Caco-2 (cell line): ENCODE measurements at regions of chr6 and their contacts with region 1.

Region 1: GRCh38 chr6:37018198-37019064 is 13.0 kb downstream of the FGD2 start:
- DNase-seq: peak; percentile 87 to 90
- H3K4me3 ChIP-seq: no peak overlapping the region
- H3K4me3 Mint-ChIP-seq: no peak overlapping the region
- H3K27ac Mint-ChIP-seq: no peak overlapping the region
- H3K4me1 ChIP-seq: peaks cover 15% of the 10 kb centered on the region
- H3K4me1 Mint-ChIP-seq: peaks cover 24% of the 10 kb centered on the region
- H3K27me3 ChIP-seq: no peaks in the 10 kb centered on the region
- H3K27me3 Mint-ChIP-seq: no peaks in the 10 kb centered on the region
- CTCF ChIP-seq: peak; percentile 85 to 96

Region 2: GRCh38 chr6:36765594-36766398 is 252.6 kb before region 1 on chr6:
- CTCF ChIA-PET with region 1: interaction called, 8 read pairs
- POLR2A ChIA-PET with region 1: no interaction called
- intact Hi-C with region 1: loop called (anchors 1 kb)
- DNase-seq: peak; percentile 77 to 85
- H3K4me3 ChIP-seq: no peak overlapping the region
- H3K4me3 Mint-ChIP-seq: no peak overlapping the region
- H3K27ac Mint-ChIP-seq: no peak overlapping the region
- H3K4me1 ChIP-seq: no peaks in the 10 kb centered on the region
- H3K4me1 Mint-ChIP-seq: no peaks in the 10 kb centered on the region
- H3K27me3 ChIP-seq: no peaks in the 10 kb centered on the region
- H3K27me3 Mint-ChIP-seq: no peaks in the 10 kb centered on the region
- CTCF ChIP-seq: peak; percentile 86 to 93

Region 3: DNA sequence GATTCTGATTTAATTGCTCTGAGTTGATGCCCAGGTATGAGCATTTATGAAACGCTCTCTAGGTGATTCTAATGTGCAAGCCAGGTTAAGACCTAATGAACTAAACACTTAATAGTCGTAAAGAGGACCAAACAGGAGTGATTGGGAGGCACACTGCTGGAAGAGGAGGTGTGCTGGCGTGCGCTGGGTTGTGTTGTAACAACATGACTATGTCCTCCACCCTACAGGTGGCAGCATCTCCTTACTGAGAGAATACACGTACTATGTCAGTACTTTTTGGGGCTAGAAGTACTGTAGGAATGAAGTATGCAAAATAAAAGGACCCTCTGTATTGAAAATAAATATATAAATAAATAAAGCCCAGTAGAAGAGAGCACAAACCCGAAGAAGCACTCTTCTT is 120.8 kb before region 1 on chr6:
- CTCF ChIA-PET with region 1: interaction called, 12 read pairs
- POLR2A ChIA-PET with region 1: no interaction called
- intact Hi-C with region 1: loop called (anchors 1 kb)
- DNase-seq: peak in 1 of 2 experiments; percentile 50
- H3K4me3 ChIP-seq: no peak overlapping the region
- H3K4me3 Mint-ChIP-seq: no peak overlapping the region
- H3K27ac Mint-ChIP-seq: no peak overlapping the region
- H3K4me1 ChIP-seq: no peaks in the 10 kb centered on the region
- H3K4me1 Mint-ChIP-seq: no peaks in the 10 kb centered on the region
- H3K27me3 ChIP-seq: no peaks in the 10 kb centered on the region
- H3K27me3 Mint-ChIP-seq: no peaks in the 10 kb centered on the region
- CTCF ChIP-seq: peak in 1 of 2 experiments; percentile 40

Region 4: DNA sequence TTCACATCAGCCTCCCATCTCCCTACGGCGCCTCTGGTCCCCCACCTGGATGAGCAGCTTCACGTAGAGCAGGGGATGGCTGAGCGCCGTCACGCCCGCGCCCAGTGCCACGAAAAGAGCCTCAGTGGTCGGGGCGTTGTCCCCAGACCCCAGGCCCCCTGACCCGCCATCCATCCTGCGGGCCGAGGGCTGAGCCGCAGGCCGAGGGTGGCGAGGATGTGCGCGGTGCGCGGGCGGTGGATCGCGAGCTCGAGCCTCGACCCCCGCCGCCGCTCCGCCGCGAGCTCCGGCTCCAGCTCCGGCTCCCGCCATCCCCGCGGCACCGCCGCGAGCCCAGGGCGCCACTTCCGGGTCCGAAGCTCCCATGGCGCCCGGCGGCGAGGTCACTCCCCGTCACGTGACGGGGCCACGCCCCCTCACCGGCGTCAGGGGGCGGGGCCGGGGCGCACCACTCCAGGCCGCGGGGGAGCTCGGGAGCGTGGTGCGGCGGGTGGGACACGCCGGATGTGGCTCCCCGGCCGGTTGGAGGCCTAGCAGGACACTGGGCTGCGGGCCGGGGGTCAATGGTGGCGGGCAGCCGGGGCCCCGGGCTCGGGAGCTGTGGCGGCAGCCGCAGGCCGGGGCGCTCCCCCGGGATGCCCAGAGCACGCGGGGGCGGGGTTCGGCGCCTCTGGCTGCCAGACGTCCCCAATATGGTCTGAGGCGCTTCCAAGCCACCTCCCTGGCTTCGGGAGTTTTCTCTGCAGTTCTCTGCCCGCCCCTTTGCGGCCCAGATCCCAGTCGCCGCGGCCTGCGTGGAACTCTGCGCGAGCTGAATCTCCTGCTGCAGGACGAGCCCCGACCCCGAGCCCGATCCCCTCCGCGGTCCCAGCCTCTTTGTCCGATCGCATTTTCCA is 32.4 kb before region 1 on chr6 and contains the start of gene MTCH1:
- CTCF ChIA-PET with region 1: interaction called, 28 read pairs
- POLR2A ChIA-PET with region 1: interaction called, 11 read pairs
- intact Hi-C with region 1: loop called (anchors 2 kb)
- DNase-seq: peak; percentile 84 to 93
- H3K4me3 ChIP-seq: peak within 1 kb of the TSS; percentile 98
- H3K4me3 Mint-ChIP-seq: no peak within 1 kb of the TSS
- H3K27ac Mint-ChIP-seq: peak within 1 kb of the TSS; percentile 94
- H3K4me1 ChIP-seq: peaks cover 6% of the 10 kb centered on the region; the same call in 1 of the 2 replicates
- H3K4me1 Mint-ChIP-seq: peaks cover 12% of the 10 kb centered on the region
- H3K27me3 ChIP-seq: no peaks in the 10 kb centered on the region
- H3K27me3 Mint-ChIP-seq: no peaks in the 10 kb centered on the region
- CTCF ChIP-seq: no peak
- total RNA-seq, gene MTCH1: 170 and 178 TPM in 2 replicates

Region 5: GRCh38 chr6:37059344-37060206 is 41.1 kb after region 1 on chr6:
- CTCF ChIA-PET with region 1: no interaction called
- POLR2A ChIA-PET with region 1: no interaction called
- intact Hi-C with region 1: loop called (anchors 1 kb)
- DNase-seq: peak; percentile 87 to 89
- H3K4me3 ChIP-seq: no peak overlapping the region
- H3K4me3 Mint-ChIP-seq: peak overlapping the region; percentile 34
- H3K27ac Mint-ChIP-seq: peak overlapping the region; percentile 95
- H3K4me1 ChIP-seq: peaks cover 22% of the 10 kb centered on the region
- H3K4me1 Mint-ChIP-seq: peaks cover 18% of the 10 kb centered on the region
- H3K27me3 ChIP-seq: no peaks in the 10 kb centered on the region
- H3K27me3 Mint-ChIP-seq: no peaks in the 10 kb centered on the region
- CTCF ChIP-seq: peak; percentile 57 to 88

Region 6: DNA sequence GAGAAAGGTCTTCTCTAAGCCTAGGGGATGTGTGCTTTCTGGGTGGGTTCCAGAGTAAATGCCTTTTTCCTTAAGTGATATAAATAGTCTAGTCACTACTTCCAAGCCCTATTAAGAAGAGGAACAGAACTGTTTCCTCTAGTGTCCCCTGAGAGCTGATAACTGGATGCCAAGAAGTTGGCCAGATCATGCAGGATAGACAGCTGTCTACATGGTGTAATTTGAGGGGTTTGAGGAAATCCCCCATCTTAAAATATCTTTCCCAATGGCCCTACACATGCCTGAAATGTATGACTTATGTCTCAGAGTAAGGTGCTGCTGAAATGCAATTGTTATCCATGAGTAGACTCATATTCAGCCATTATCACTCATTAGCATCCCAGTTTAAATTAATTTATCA is 131.3 kb after region 1 on chr6:
- CTCF ChIA-PET with region 1: no interaction called
- POLR2A ChIA-PET with region 1: no interaction called
- intact Hi-C with region 1: no loop called
- DNase-seq: no peak
- H3K4me3 ChIP-seq: no peak overlapping the region
- H3K4me3 Mint-ChIP-seq: no peak overlapping the region
- H3K27ac Mint-ChIP-seq: no peak overlapping the region
- H3K4me1 ChIP-seq: peaks cover 44% of the 10 kb centered on the region
- H3K4me1 Mint-ChIP-seq: peaks cover 19% of the 10 kb centered on the region
- H3K27me3 ChIP-seq: no peaks in the 10 kb centered on the region
- H3K27me3 Mint-ChIP-seq: no peaks in the 10 kb centered on the region
- CTCF ChIP-seq: no peak

Region 7: GRCh38 chr6:37207903-37208456 is 189.5 kb after region 1 on chr6:
- CTCF ChIA-PET with region 1: interaction called, 163 read pairs
- POLR2A ChIA-PET with region 1: interaction called, 3 read pairs
- intact Hi-C with region 1: loop called (anchors 1 kb)
- DNase-seq: peak; percentile 89 to 92
- H3K4me3 ChIP-seq: no peak overlapping the region
- H3K4me3 Mint-ChIP-seq: no peak overlapping the region
- H3K27ac Mint-ChIP-seq: no peak overlapping the region
- H3K4me1 ChIP-seq: peaks cover 25% of the 10 kb centered on the region
- H3K4me1 Mint-ChIP-seq: peaks cover 26% of the 10 kb centered on the region
- H3K27me3 ChIP-seq: no peaks in the 10 kb centered on the region
- H3K27me3 Mint-ChIP-seq: no peaks in the 10 kb centered on the region
- CTCF ChIP-seq: peak; percentile 87 to 89